ENCODE measurements at regions of chr5 and their contacts with region 1.

Region 1: DNA sequence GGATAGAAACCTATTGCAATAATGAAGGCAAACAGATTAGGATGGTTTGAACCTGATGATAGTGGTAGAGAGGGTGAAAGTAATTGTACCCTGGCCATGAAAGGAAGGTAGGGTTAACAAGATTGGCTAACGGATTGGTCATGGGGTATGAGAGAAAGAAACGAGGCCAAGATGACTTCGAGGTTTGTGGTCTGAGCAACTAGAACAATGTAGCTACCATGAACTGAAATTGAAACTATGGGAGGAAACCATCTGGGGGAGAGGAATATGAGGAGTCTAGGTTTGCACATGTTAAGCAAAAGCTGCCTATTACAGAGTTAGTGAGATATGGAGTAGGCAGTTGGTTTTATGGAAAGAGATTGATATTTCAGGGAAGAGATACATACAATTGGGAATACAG is 406.0 kb downstream of the PRELID2 start:
- DNase-seq: no peak
- H3K4me3 ChIP-seq: no peak overlapping the region
- H3K27ac ChIP-seq: no peak overlapping the region
- H3K4me1 ChIP-seq: no peaks in the 10 kb centered on the region
- H3K27me3 ChIP-seq: no peaks in the 10 kb centered on the region
- CTCF ChIP-seq: no peak
- POLR2A ChIP-seq: no peak

Region 2: GRCh38 chr5:144644317-144644716 is 784.9 kb before region 1 on chr5:
- intact Hi-C with region 1: loop called (anchors 10 kb)
- DNase-seq: no peak
- H3K4me3 ChIP-seq: no peak overlapping the region
- H3K27ac ChIP-seq: no peak overlapping the region
- H3K4me1 ChIP-seq: no peaks in the 10 kb centered on the region
- H3K27me3 ChIP-seq: no peaks in the 10 kb centered on the region
- CTCF ChIP-seq: no peak
- POLR2A ChIP-seq: no peak

Region 3: DNA sequence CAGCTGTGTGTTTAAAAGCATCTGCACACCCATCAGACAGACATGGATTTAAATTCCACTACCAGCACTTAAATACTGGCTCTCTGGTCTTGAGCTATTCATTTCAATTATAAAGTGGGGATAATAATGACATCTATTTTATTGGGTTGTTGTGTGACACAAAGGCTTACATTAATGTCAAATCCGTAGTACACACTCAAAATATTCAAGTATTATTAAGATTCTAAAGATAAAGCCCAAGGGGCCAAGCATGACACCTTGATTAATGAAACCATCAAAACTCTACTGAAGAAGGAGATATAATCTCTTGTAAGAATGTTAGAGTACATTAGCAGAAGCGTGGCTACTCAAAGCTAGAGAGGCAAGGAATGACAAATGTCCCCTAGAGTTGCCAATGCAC is 515.5 kb before region 1 on chr5:
- intact Hi-C with region 1: loop called (anchors 10 kb)
- DNase-seq: no peak
- H3K4me3 ChIP-seq: no peak overlapping the region
- H3K27ac ChIP-seq: no peak overlapping the region
- H3K4me1 ChIP-seq: no peaks in the 10 kb centered on the region
- H3K27me3 ChIP-seq: no peaks in the 10 kb centered on the region
- CTCF ChIP-seq: no peak
- POLR2A ChIP-seq: no peak

Region 4: DNA sequence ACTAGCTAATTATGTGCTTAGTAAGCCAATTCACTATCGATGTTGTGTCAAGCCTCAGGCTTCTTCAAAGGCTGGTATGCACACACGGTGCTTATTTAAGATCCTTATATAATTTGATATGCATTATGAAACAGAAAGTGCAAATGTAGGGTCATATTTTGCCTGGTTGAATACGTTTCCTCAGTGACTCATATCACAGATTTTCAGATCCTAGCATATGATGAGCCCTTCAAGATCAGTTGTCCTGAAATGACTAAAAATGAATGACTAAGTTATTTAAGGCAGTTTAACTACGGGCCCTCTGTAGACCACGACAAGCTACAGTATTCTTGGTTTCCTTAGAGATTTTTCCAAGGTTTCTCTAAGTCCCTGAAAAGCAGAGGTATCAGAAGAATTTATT is 372.4 kb before region 1 on chr5:
- intact Hi-C with region 1: no loop called
- DNase-seq: no peak
- H3K4me3 ChIP-seq: no peak overlapping the region
- H3K27ac ChIP-seq: no peak overlapping the region
- H3K4me1 ChIP-seq: no peaks in the 10 kb centered on the region
- H3K27me3 ChIP-seq: no peaks in the 10 kb centered on the region
- CTCF ChIP-seq: no peak
- POLR2A ChIP-seq: no peak

Measured in breast epithelium (tissue), 4 donors.